H1 (cell line): ENCODE measurements at regions of chr9 and their contacts with region 1.

Region 1: DNA sequence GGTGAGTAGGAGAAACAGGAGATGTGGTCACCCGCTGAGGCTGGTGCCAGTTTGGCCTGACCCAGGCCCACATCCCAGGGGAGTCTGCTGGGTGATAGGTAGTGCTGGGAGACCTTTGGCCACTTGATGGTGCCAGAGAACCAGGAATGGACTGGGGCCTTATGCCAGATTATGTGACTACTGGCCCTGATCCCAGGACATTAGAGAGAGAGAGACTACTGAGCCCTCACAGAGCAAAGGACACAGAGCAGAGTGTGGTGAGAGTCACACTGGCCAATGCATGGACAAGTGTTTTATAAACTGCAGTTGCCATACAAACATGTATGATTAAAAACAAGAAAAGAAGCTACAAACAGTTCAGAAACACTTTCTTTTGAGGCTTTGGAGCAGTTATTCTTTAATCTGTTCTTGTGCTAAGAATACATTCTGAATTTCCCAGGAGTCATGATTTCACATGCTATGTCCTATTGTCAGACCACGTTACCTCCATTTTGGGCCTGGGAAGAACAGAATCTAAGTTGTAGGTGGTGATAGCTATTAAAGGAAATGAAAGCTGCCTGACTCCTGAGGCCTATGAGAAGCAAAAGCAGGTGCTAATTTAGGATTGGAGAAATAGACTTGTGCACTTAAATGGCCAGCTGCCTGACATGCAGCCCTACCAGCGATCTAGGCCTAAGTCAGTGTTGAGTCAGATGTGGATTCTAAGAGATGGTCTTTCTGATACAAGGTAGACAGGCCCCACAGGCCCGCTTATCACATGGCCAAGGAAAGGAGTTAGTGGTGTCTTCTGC is 32.6 kb upstream of the TMOD1 start:
- DNase-seq: peak; percentile 46 to 79
- H3K4me3 ChIP-seq: no peak overlapping the region
- H3K27ac ChIP-seq: no peak overlapping the region
- H3K4me1 ChIP-seq: no peaks in the 10 kb centered on the region
- H3K27me3 ChIP-seq: no peaks in the 10 kb centered on the region
- CTCF ChIP-seq: peak; percentile 90 to 96 (median 93)
- EP300 ChIP-seq: no peak
- POLR2A ChIP-seq: no peak
- RAD21 ChIP-seq: peak; percentile 100

Region 2: DNA sequence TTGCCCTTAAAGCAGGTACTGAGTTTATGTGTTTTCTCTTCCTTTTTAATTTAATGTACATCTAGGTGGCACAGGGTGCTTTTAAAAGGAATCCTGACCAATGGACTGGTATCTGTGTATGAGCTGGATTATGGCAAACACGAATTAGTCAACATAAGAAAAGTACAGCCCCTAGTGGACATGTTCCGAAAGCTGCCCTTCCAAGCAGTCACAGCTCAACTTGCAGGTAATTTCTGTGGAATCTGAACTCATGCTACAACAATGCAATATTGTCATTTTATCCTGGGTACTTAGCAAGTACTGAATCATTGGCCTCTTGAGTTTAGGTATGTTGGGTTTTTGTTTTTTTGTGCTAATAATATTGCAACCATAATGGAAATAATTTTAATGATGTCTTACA is 18.3 kb after region 1 on chr9:
- CTCF ChIA-PET with region 1: interaction called, 69 read pairs
- POLR2A ChIA-PET with region 1: interaction called, 4 read pairs
- DNase-seq: no peak
- H3K4me3 ChIP-seq: no peak overlapping the region
- H3K27ac ChIP-seq: no peak overlapping the region
- H3K4me1 ChIP-seq: no peaks in the 10 kb centered on the region
- H3K27me3 ChIP-seq: peaks cover 0 to 3% (median 0%) of the 10 kb centered on the region in 4 experiments; a peak in 2 of 7 replicates
- CTCF ChIP-seq: peak in 1 of 3 experiments; percentile 40; a peak in 2 of 4 replicates
- EP300 ChIP-seq: no peak
- POLR2A ChIP-seq: no peak
- RAD21 ChIP-seq: no peak

Region 3: DNA sequence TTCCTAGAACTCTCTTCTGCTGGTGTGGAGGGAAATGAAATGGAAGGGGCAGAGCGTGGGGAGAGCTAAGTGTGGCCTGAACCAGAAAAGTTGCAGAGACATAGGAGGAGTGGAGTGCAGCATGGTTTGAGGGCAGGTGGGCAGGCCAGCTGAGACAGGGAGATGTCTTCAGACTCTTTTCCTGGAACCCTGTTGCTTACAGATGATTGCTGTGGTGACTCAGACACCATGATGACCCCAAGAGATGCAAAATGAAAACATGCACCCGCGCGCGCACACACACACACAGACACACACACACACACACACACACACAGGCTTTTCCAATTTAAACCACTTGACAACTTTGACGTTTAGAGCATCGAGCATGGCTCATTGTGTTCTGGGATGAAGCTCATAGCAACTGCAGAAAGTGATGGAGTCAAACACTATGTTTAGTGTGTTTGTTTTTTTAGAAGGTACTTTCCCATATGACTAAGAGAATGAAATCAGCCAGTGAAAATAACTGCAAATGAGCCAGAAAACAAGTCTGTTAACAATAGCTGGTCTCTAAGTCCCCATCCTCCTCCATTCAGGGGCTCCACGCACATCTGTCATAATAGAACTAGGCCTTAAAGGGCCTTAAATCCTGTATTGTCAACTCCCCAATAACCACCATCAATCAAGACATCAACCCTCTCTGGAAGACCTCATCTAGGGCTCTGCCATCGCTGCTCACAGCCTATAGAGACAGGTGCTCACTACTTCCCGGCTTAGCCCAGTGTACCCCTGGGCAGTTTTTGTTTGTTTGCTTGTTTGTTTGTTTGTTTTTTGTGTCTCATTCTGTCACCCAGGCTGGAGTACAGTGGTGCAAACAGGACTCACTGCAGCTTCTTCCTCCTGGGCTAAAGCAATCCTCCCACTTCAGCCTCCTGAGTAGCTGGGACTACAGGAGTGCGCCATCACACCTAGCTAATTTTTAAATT is 42.2 kb after region 1 on chr9:
- CTCF ChIA-PET with region 1: interaction called, 15 read pairs
- POLR2A ChIA-PET with region 1: no interaction called
- DNase-seq: peak in 1 of 2 experiments; percentile 29
- H3K4me3 ChIP-seq: no peak overlapping the region
- H3K27ac ChIP-seq: no peak overlapping the region
- H3K4me1 ChIP-seq: peaks cover 0 to under 1% (median 0%) of the 10 kb centered on the region in 4 experiments; a peak in 1 of 7 replicates
- H3K27me3 ChIP-seq: no peaks in the 10 kb centered on the region; a peak in 2 of 7 replicates
- CTCF ChIP-seq: no peak
- EP300 ChIP-seq: no peak
- POLR2A ChIP-seq: no peak
- RAD21 ChIP-seq: no peak

Region 4: DNA sequence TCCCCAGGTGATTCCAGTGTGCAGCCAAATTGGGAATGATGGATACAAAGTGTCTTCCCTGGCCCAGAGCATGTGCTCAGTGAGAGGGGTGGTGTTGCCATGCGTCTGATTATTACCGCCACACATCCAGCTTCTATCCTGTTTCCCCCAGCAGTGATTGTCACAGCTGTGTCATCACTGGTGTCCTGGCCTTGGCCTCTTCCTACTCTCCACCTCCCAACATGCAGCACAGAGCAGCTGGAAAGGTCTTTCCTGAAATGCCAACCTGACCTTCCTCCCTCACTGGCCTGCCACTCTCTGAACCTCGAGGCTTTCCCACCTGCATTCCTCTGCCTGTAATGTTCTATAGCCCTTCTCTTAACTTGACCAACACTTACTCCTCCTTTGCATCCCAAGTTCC is 92.6 kb after region 1 on chr9:
- CTCF ChIA-PET with region 1: interaction called, 12 read pairs
- POLR2A ChIA-PET with region 1: no interaction called
- DNase-seq: no peak
- H3K4me3 ChIP-seq: no peak overlapping the region
- H3K27ac ChIP-seq: no peak overlapping the region
- H3K4me1 ChIP-seq: peaks cover 2 to 6% (median 5%) of the 10 kb centered on the region in 4 experiments; a peak in 6 of 7 replicates
- H3K27me3 ChIP-seq: no peaks in the 10 kb centered on the region; a peak in 1 of 7 replicates
- CTCF ChIP-seq: no peak
- EP300 ChIP-seq: no peak
- POLR2A ChIP-seq: no peak
- RAD21 ChIP-seq: no peak

Region 5: DNA sequence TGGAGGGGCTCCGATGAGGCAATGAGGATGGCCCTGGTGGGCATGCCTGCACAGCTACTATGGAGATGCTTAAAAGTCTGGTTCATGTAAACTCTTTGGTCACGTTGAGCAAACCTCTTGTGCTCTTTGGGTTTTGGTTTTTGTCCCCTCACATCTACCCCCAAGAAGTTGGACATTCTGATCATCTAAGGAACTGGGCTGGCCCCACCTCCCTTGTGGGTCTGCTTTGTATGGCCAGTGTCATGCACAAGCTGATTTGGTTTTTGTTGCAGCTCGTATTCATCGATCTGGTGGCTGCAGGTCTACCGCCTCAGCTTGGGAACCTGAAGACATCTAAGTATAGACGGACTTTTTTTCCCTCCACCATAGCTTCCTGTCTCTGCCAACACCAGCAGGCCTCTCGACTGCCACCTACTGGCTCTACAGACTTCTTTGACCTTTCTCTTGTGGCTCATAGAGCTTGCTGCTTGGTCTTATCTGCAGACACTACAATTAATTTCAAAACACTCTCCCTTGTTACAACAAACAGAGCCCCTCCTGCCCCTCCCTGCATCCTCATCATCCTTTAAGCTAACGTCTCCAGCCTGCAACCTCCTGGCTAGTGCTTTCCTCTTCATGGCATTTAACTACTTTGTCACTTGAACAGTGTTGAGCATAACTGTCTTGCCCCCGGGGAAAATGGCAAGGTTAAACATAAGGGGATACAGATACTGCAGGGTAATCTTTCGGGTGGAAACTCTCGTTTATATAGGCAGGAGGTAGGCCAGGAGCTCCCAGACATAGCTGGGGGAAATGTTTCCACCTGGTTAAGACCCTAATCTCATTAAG is 129.8 kb after region 1 on chr9:
- CTCF ChIA-PET with region 1: interaction called, 574 read pairs
- POLR2A ChIA-PET with region 1: interaction called, 9 read pairs
- DNase-seq: peak; percentile 29 to 77
- H3K4me3 ChIP-seq: no peak overlapping the region
- H3K27ac ChIP-seq: no peak overlapping the region
- H3K4me1 ChIP-seq: peaks cover 0 to 5% (median 0%) of the 10 kb centered on the region in 4 experiments; a peak in 3 of 7 replicates
- H3K27me3 ChIP-seq: no peaks in the 10 kb centered on the region
- CTCF ChIP-seq: peak; percentile 70 to 92 (median 88)
- EP300 ChIP-seq: no peak
- POLR2A ChIP-seq: no peak
- RAD21 ChIP-seq: peak; percentile 84 to 87

Region 6: GRCh38 chr9:97638666-97639065 is 169.8 kb after region 1 on chr9:
- CTCF ChIA-PET with region 1: interaction called, 13 read pairs
- POLR2A ChIA-PET with region 1: no interaction called
- DNase-seq: no peak
- H3K4me3 ChIP-seq: no peak overlapping the region
- H3K27ac ChIP-seq: no peak overlapping the region
- H3K4me1 ChIP-seq: peaks cover 0 to 5% (median 0%) of the 10 kb centered on the region in 4 experiments; a peak in 3 of 7 replicates
- H3K27me3 ChIP-seq: no peaks in the 10 kb centered on the region
- CTCF ChIP-seq: peak in 1 of 3 experiments; percentile 39; a peak in 1 of 4 replicates
- EP300 ChIP-seq: no peak
- POLR2A ChIP-seq: no peak
- RAD21 ChIP-seq: no peak

Region 7: GRCh38 chr9:97710356-97711222 is 241.7 kb after region 1 on chr9:
- CTCF ChIA-PET with region 1: no interaction called
- POLR2A ChIA-PET with region 1: no interaction called
- DNase-seq: peak in 1 of 2 experiments; percentile 58
- H3K4me3 ChIP-seq: peak overlapping the region in 2 of 4 experiments; percentile 17 to 33; a peak in 1 of 8 replicates
- H3K27ac ChIP-seq: no peak overlapping the region
- H3K4me1 ChIP-seq: peaks cover 0 to 9% (median 1%) of the 10 kb centered on the region in 4 experiments; a peak in 3 of 7 replicates
- H3K27me3 ChIP-seq: 0 out of 7 replicates have a peak, but pooled peaks cover 0 to 1% (median 0%) of the 10 kb centered on the region in 4 experiments
- CTCF ChIP-seq: peak; percentile 39 to 80 (median 74)
- EP300 ChIP-seq: no peak
- POLR2A ChIP-seq: no peak
- RAD21 ChIP-seq: peak; percentile 88 to 93

Region 8: GRCh38 chr9:97735070-97735600 is 266.3 kb after region 1 on chr9:
- CTCF ChIA-PET with region 1: no interaction called
- POLR2A ChIA-PET with region 1: no interaction called
- DNase-seq: no peak
- H3K4me3 ChIP-seq: no peak overlapping the region
- H3K27ac ChIP-seq: no peak overlapping the region
- H3K4me1 ChIP-seq: no peaks in the 10 kb centered on the region
- H3K27me3 ChIP-seq: peaks cover 0 to 6% (median 5%) of the 10 kb centered on the region in 4 experiments; a peak in 5 of 7 replicates
- CTCF ChIP-seq: no peak
- EP300 ChIP-seq: no peak
- POLR2A ChIP-seq: no peak
- RAD21 ChIP-seq: no peak